ENCODE measurements at regions of chrX and their contacts with region 1.

Region 1: DNA sequence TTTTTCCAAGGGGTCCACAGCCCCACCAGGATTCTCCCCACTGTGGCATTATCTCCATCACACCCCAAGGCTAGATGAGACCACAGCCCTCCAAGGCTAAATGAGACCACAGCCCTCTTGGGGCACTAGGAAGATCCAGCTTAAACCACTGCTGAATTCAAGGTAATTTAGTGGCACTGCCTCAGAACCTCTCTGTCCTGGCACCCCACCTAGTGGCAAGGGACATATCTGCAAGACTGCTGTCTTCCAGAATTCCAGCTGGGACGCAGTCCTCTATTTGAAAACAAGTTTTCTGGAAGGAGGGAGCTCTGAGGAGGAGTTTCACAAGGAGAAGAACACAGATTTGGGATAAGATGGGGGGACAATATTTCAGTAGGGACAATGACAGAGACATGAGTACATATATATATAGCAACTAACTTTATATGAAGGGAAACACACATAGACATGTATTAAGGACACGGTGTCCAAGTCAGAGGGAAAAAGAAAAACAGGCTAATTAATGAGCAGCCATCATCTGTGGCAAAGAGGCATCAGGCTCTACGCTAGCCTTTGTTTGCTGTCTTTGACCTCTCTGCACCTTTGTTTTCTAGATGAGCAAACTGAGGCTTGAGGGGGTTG is 9.3 kb downstream of the CETN2 start:
- DNase-seq: peak; percentile 23
- ATAC-seq: peak; percentile 56
- H3K4me3 ChIP-seq: no peak overlapping the region
- H3K27ac ChIP-seq: no peak overlapping the region
- H3K4me1 ChIP-seq: peaks cover 10% of the 10 kb centered on the region
- H3K27me3 ChIP-seq: no peaks in the 10 kb centered on the region
- CTCF ChIP-seq: peak; percentile 61
- EP300 ChIP-seq: no peak
- POLR2A ChIP-seq: no peak
- RAD21 ChIP-seq: no peak

Region 2: GRCh38 chrX:151724563-151725337 is 1096.5 kb before region 1 on chrX:
- CTCF ChIA-PET with region 1: no interaction called
- POLR2A ChIA-PET with region 1: no interaction called
- in situ Hi-C with region 1: loop called (anchors 25 kb)
- intact Hi-C with region 1: no loop called
- DNase-seq: no peak
- ATAC-seq: no peak
- H3K4me3 ChIP-seq: no peak overlapping the region
- H3K27ac ChIP-seq: no peak overlapping the region
- H3K4me1 ChIP-seq: no peaks in the 10 kb centered on the region
- H3K27me3 ChIP-seq: no peaks in the 10 kb centered on the region
- CTCF ChIP-seq: no peak
- EP300 ChIP-seq: no peak
- POLR2A ChIP-seq: no peak
- RAD21 ChIP-seq: no peak

Measured in HepG2 (cell line).